Aorta (tissue), 5 donors: ENCODE measurements at regions of chr14 and their contacts with region 1.

Region 1: DNA sequence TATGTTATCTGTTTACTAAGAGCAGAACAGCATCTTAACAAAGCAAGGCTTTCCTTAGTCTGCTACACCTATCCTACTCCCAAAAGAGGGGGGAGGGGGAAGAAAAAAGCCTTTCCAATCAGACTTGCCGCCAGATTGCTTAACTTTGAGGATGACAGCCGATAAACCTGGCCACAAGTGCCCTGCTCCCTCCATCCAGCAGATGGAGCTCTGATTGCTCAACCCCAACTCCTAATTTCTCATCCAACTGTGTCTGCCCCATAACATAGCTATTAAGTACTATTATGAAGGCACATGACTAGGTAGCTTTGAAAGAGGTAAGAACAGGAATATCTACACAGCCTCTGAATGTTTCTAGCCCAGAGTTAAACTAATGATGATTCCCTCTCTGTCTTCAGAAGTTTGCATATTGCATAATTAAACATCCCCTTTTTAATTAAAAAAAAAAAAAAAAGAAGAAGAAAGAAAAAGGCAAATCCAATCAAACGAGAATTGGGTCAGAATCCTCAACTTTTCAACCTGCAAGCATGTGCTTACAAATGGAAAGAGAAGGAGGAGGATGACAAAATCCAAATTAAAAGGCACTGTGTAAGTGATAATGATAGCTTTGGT is 247.4 kb downstream of the GALC start:
- DNase-seq: no peak
- ATAC-seq: no peak
- H3K4me3 ChIP-seq: no peak overlapping the region
- H3K27ac ChIP-seq: no peak overlapping the region
- H3K4me1 ChIP-seq: no peaks in the 10 kb centered on the region
- H3K27me3 ChIP-seq: no peaks in the 10 kb centered on the region

Region 2: DNA sequence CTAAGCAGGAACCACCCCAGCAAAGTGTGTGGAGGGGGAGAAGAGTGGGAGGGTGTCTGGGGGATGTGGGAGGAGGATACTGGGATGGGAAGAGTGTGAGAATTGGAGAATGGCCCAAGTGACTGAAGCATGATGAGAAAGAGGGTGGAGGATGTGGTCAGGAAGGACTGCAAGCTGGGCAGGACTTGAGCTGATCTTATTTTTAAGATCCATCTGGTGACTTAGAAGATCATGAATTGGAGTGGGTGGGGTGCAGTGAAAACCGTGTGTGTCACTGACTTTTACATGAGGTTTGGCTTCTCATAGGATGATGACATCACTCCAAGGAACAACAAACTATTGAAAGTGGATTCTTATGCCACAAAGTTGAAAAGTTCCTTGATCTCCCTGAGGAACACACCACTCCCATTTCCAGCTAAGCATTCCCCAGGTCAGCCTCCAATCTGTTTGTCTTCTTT is 40.1 kb before region 1 on chr14:
- intact Hi-C with region 1: no loop called
- DNase-seq: no peak
- ATAC-seq: no peak
- H3K4me3 ChIP-seq: no peak overlapping the region
- H3K27ac ChIP-seq: no peak overlapping the region
- H3K4me1 ChIP-seq: no peaks in the 10 kb centered on the region
- H3K27me3 ChIP-seq: no peaks in the 10 kb centered on the region

Region 3: DNA sequence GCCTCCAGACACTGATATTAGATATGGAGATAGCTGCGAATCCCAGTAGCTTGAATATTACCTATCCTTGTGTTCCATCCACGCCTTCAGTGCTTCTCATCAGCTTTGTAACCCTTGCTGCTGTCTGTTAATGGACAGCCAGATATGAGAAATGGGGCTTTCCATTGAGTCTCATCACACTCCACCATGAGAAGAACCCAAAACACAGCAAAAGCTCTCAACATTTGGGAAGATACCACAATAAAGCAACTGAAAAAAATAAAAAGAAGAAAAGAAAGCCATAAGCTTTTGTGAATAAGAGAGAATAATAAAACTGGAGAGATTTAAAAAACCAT is 21.9 kb after region 1 on chr14:
- intact Hi-C with region 1: no loop called
- DNase-seq: no peak
- ATAC-seq: no peak
- H3K4me3 ChIP-seq: no peak overlapping the region
- H3K27ac ChIP-seq: no peak overlapping the region
- H3K4me1 ChIP-seq: no peaks in the 10 kb centered on the region
- H3K27me3 ChIP-seq: no peaks in the 10 kb centered on the region

Region 4: GRCh38 chr14:87896393-87897380 is 151.1 kb after region 1 on chr14:
- intact Hi-C with region 1: loop called in 1 of 2 experiments (anchors 10 kb)
- DNase-seq: no peak
- ATAC-seq: no peak
- H3K4me3 ChIP-seq: no peak overlapping the region
- H3K27ac ChIP-seq: no peak overlapping the region
- H3K4me1 ChIP-seq: no peaks in the 10 kb centered on the region
- H3K27me3 ChIP-seq: peaks cover 0 to 1% of the 10 kb centered on the region in 2 donors

Region 5: GRCh38 chr14:89000007-89000942 is 1254.7 kb after region 1 on chr14:
- intact Hi-C with region 1: no loop called
- DNase-seq: peak in 1 of 2 donors; percentile 74
- ATAC-seq: no peak
- H3K4me3 ChIP-seq: no peak overlapping the region
- H3K27ac ChIP-seq: no peak overlapping the region
- H3K4me1 ChIP-seq: no peaks in the 10 kb centered on the region
- H3K27me3 ChIP-seq: peaks cover 0 to 2% of the 10 kb centered on the region in 2 donors